Endothelial cell of umbilical vein (primary cell): ENCODE measurements at regions of chr3 and their contacts with region 1.

Region 1: GRCh38 chr3:136818769-136819391 is at the start of gene SLC35G2:
- DNase-seq: peak; percentile 84
- H3K4me3 ChIP-seq: peak within 1 kb of the TSS; percentile 31 to 78 (median 77)
- H3K27ac ChIP-seq: peak within 1 kb of the TSS; percentile 97
- H3K4me1 ChIP-seq: peaks cover 16% of the 10 kb centered on the region
- H3K27me3 ChIP-seq: no peaks in the 10 kb centered on the region
- CTCF ChIP-seq: no peak
- POLR2A ChIP-seq: no peak
- total RNA-seq, gene SLC35G2: 17.7 and 19.4 TPM in 2 replicates

Region 2: GRCh38 chr3:136390574-136390973 is 428.3 kb before region 1 on chr3:
- CTCF ChIA-PET with region 1: no interaction called
- POLR2A ChIA-PET with region 1: no interaction called
- dilution Hi-C with region 1: no loop called
- intact Hi-C with region 1: loop called (anchors 2 kb)
- DNase-seq: peak; percentile 78
- H3K4me3 ChIP-seq: no peak overlapping the region
- H3K27ac ChIP-seq: no peak overlapping the region
- H3K4me1 ChIP-seq: peaks cover 11% of the 10 kb centered on the region
- H3K27me3 ChIP-seq: no peaks in the 10 kb centered on the region
- CTCF ChIP-seq: no peak
- POLR2A ChIP-seq: no peak

Region 3: GRCh38 chr3:136671921-136672320 is 147.0 kb before region 1 on chr3:
- CTCF ChIA-PET with region 1: no interaction called
- POLR2A ChIA-PET with region 1: no interaction called
- dilution Hi-C with region 1: no loop called
- intact Hi-C with region 1: no loop called
- DNase-seq: no peak
- H3K4me3 ChIP-seq: no peak overlapping the region
- H3K27ac ChIP-seq: no peak overlapping the region
- H3K4me1 ChIP-seq: peaks cover 5% of the 10 kb centered on the region
- H3K27me3 ChIP-seq: no peaks in the 10 kb centered on the region
- CTCF ChIP-seq: no peak
- POLR2A ChIP-seq: no peak

Region 4: GRCh38 chr3:136682740-136683312 is 136.1 kb before region 1 on chr3:
- CTCF ChIA-PET with region 1: no interaction called
- POLR2A ChIA-PET with region 1: no interaction called
- dilution Hi-C with region 1: no loop called
- intact Hi-C with region 1: no loop called
- DNase-seq: no peak
- H3K4me3 ChIP-seq: no peak overlapping the region
- H3K27ac ChIP-seq: no peak overlapping the region
- H3K4me1 ChIP-seq: no peaks in the 10 kb centered on the region
- H3K27me3 ChIP-seq: no peaks in the 10 kb centered on the region
- CTCF ChIP-seq: no peak
- POLR2A ChIP-seq: no peak

Region 5: DNA sequence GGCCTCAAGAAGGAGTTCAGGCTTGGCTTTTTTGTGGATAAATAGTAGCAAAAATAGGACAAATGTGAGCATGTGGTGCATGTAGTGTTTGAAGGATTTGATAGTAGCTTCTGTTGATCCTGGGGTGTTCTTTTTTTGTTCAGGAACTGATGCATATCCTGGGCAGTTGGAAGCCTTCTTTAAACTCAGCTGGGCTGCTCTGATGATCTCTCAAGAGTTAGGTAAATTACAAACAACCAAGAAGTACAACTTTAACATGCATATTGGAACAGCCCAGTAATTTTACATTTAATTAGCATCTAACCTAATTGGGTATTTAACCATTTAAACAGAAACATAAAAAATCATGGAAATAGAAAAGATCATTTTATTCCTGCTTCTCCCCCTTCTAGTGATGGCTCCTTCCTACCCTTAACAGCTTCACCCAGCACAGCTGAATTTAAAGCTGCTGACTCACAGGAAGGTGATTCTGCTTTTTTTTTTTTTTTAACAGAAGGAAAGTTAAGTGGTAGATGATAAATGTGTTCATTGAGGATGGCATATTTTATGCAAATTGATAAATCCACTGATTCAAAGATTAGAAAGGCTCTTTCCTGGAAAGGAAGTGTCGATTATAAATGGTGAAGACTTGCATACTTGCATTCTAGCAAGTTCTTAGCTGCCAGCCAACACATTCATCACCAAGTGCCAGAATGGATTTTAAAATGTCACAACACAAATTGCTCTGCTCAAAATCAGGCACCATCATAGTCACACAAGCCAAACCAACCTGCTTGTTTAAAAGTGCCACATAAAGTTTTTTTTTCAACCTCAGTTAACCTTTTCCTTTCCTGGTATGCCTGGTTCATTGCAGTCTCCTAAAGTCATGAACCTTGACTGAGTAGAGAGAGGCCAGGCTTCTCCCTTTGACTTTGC is 20.0 kb after region 1 on chr3:
- CTCF ChIA-PET with region 1: interaction called, 3 read pairs
- POLR2A ChIA-PET with region 1: interaction called, 3 read pairs
- dilution Hi-C with region 1: no loop called
- intact Hi-C with region 1: loop called (anchors 1 kb)
- DNase-seq: peak; percentile 88
- H3K4me3 ChIP-seq: peak overlapping the region in 1 of 3 experiments; percentile 33
- H3K27ac ChIP-seq: peak overlapping the region; percentile 86
- H3K4me1 ChIP-seq: peaks cover 54% of the 10 kb centered on the region
- H3K27me3 ChIP-seq: no peaks in the 10 kb centered on the region
- CTCF ChIP-seq: no peak
- POLR2A ChIP-seq: peak; percentile 25

Region 6: GRCh38 chr3:136893848-136894443 is 75.1 kb after region 1 on chr3:
- CTCF ChIA-PET with region 1: no interaction called
- POLR2A ChIA-PET with region 1: no interaction called
- dilution Hi-C with region 1: no loop called
- intact Hi-C with region 1: loop called (anchors 1 kb)
- DNase-seq: peak; percentile 94
- H3K4me3 ChIP-seq: peak overlapping the region in 1 of 3 experiments; percentile 3
- H3K27ac ChIP-seq: peak overlapping the region; percentile 92
- H3K4me1 ChIP-seq: peaks cover 40% of the 10 kb centered on the region
- H3K27me3 ChIP-seq: no peaks in the 10 kb centered on the region
- CTCF ChIP-seq: no peak
- POLR2A ChIP-seq: no peak

Region 7: DNA sequence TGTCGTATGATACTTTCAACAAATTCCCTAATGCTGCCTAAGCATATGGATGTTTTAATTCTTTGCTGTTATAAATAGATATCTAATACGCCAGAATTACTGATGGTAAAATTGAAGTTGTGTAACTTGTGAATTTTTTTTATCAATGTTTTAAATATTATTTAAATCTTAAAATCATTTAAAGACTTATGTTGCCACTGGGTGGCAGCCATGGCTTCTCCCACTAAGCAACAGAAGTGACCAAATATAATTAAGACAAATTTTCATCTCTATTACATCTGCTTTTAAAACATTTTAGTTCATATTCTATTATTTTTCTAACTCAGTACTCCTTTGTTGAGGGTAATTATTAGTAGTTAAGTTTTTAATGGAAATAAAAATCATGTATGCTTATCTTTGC is 130.8 kb after region 1 on chr3:
- CTCF ChIA-PET with region 1: no interaction called
- POLR2A ChIA-PET with region 1: no interaction called
- dilution Hi-C with region 1: no loop called
- intact Hi-C with region 1: loop called (anchors 2 kb)
- DNase-seq: peak; percentile 44
- H3K4me3 ChIP-seq: no peak overlapping the region
- H3K27ac ChIP-seq: no peak overlapping the region
- H3K4me1 ChIP-seq: peaks cover 12% of the 10 kb centered on the region
- H3K27me3 ChIP-seq: no peaks in the 10 kb centered on the region
- CTCF ChIP-seq: peak in 1 of 2 donors; percentile 16
- POLR2A ChIP-seq: no peak

Region 8: DNA sequence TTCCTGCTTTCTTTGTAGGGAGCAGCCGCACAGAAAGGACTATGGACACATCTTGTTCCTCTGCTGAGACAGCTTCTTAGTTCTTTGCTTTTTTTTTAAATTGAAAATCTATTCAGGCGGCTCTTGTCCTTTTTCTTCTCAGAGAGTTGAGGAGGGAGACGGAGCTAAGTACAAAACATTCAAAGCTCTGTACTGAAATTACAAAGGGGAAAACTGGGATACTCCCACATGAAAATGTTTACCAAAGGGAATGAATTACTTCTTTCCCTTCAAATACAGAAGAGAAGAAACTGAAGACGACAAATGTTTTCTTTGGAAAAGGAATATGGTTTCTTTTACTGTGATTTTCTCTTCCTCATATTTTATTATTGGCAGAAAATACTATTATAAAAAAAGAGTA is 424.1 kb after region 1 on chr3:
- CTCF ChIA-PET with region 1: no interaction called
- POLR2A ChIA-PET with region 1: no interaction called
- dilution Hi-C with region 1: no loop called
- intact Hi-C with region 1: no loop called
- DNase-seq: no peak
- H3K4me3 ChIP-seq: no peak overlapping the region
- H3K27ac ChIP-seq: no peak overlapping the region
- H3K4me1 ChIP-seq: no peaks in the 10 kb centered on the region
- H3K27me3 ChIP-seq: no peaks in the 10 kb centered on the region
- CTCF ChIP-seq: no peak
- POLR2A ChIP-seq: no peak